ENCODE measurements at regions of chr10 and their contacts with region 1.

Region 1: GRCh38 chr10:102394079-102394800 is 1.3 kb upstream of the NFKB2 start:
- DNase-seq: peak; percentile 98 to 99
- ATAC-seq: peak; percentile 95
- H3K4me3 ChIP-seq: peak overlapping the region; percentile 29 to 32
- H3K27ac ChIP-seq: peak overlapping the region in 1 of 2 donors; percentile 64
- H3K4me1 ChIP-seq: no peaks in the 10 kb centered on the region
- H3K27me3 ChIP-seq: no peaks in the 10 kb centered on the region

Region 2: DNA sequence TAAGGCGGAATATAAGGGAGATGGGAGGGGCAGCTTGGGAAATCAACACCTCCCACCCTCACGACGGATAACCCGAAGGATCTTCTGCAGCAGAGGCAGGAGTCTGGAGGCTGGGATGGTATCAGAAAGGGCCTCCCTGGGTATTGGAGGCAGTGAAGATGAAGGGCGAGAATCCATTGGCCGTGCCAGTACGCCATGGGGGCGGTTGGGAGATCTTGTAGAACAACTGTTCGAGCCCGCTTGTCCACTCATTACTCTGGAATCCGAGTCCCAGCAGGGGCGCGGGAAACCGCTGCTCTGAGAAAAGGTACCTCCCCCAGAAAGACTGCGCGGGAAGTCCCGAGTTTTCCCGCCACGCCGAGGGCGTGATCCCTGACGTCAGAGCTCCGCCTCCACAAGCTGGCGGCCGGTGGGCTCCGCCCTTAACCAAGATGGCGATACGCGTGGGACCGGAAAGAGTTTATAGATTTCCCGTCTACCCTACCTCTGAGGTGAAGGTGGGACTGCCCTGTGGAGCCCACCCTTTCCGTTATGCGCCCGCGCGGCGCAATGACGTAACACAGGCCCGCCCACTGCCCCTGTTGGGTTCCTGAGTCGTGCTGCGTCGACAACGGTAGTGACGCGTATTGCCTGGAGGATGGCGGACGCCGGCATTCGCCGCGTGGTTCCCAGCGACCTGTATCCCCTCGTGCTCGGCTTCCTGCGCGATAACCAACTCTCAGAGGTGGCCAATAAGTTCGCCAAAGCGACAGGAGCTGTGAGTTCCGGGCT is 242.3 kb before region 1 on chr10 and contains the start of gene NOLC1:
- intact Hi-C with region 1: loop called in 1 of 2 experiments (anchors 10 kb)
- DNase-seq: peak; percentile 99 to 100
- ATAC-seq: peak; percentile 99
- H3K4me3 ChIP-seq: peak within 1 kb of the TSS; percentile 62 to 76
- H3K27ac ChIP-seq: peak within 1 kb of the TSS in 1 of 2 donors; percentile 98
- H3K4me1 ChIP-seq: no peaks in the 10 kb centered on the region
- H3K27me3 ChIP-seq: no peaks in the 10 kb centered on the region
- total RNA-seq, gene NOLC1: 35.3 to 35.9 TPM

Region 3: GRCh38 chr10:102420810-102421644 is 26.8 kb after region 1 on chr10 and contains the start of gene FBXL15:
- intact Hi-C with region 1: loop called in 1 of 2 experiments (anchors 2 kb)
- DNase-seq: peak; percentile 98
- ATAC-seq: peak; percentile 96
- H3K4me3 ChIP-seq: peak within 1 kb of the TSS; percentile 71 to 73
- H3K27ac ChIP-seq: peak within 1 kb of the TSS in 1 of 2 donors; percentile 76
- H3K4me1 ChIP-seq: no peaks in the 10 kb centered on the region
- H3K27me3 ChIP-seq: no peaks in the 10 kb centered on the region
- total RNA-seq, gene FBXL15: 8.7 to 12.1 TPM

Region 4: GRCh38 chr10:102432162-102432950 is 38.1 kb after region 1 on chr10 and contains the start of gene CUEDC2:
- intact Hi-C with region 1: no loop called
- DNase-seq: peak; percentile 98 to 99
- ATAC-seq: peak; percentile 96
- H3K4me3 ChIP-seq: peak within 1 kb of the TSS; percentile 58 to 73
- H3K27ac ChIP-seq: no peak within 1 kb of the TSS
- H3K4me1 ChIP-seq: peaks cover 0 to 4% of the 10 kb centered on the region in 2 donors
- H3K27me3 ChIP-seq: no peaks in the 10 kb centered on the region
- total RNA-seq, gene CUEDC2: 40.6 to 48.2 TPM

Region 5: GRCh38 chr10:102461187-102462054 is 67.2 kb after region 1 on chr10:
- intact Hi-C with region 1: no loop called
- DNase-seq: peak; percentile 94 to 96
- ATAC-seq: peak; percentile 95
- H3K4me3 ChIP-seq: peak overlapping the region; percentile 7 to 32
- H3K27ac ChIP-seq: no peak overlapping the region
- H3K4me1 ChIP-seq: no peaks in the 10 kb centered on the region
- H3K27me3 ChIP-seq: no peaks in the 10 kb centered on the region

Region 6: GRCh38 chr10:102503281-102504220 is 109.3 kb after region 1 on chr10 and contains the start of gene SUFU:
- intact Hi-C with region 1: loop called in 1 of 2 experiments (anchors 1 kb)
- DNase-seq: peak; percentile 97 to 98
- ATAC-seq: peak; percentile 93
- H3K4me3 ChIP-seq: peak within 1 kb of the TSS; percentile 75 to 86
- H3K27ac ChIP-seq: peak within 1 kb of the TSS in 1 of 2 donors; percentile 32
- H3K4me1 ChIP-seq: peaks cover 0 to 3% of the 10 kb centered on the region in 2 donors
- H3K27me3 ChIP-seq: no peaks in the 10 kb centered on the region
- total RNA-seq, gene SUFU: 11.3 to 24.0 TPM

Region 7: GRCh38 chr10:102583435-102584417 is 189.5 kb after region 1 on chr10:
- intact Hi-C with region 1: loop called in 1 of 2 experiments (anchors 5 kb)
- DNase-seq: peak; percentile 90 to 93
- ATAC-seq: peak; percentile 90
- H3K4me3 ChIP-seq: no peak overlapping the region
- H3K27ac ChIP-seq: no peak overlapping the region
- H3K4me1 ChIP-seq: no peaks in the 10 kb centered on the region
- H3K27me3 ChIP-seq: no peaks in the 10 kb centered on the region

Measured in aorta (tissue), 5 donors.